ENCODE measurements at regions of chr4 and their contacts with region 1.

Region 1: GRCh38 chr4:89254847-89255246 is 52.8 kb downstream of the GPRIN3 start:
- DNase-seq: peak; percentile 52
- ATAC-seq: peak; percentile 53
- H3K4me3 ChIP-seq: no peak overlapping the region
- H3K4me3 Mint-ChIP-seq: no peak overlapping the region
- H3K27ac ChIP-seq: no peak overlapping the region
- H3K27ac Mint-ChIP-seq: no peak overlapping the region
- H3K4me1 ChIP-seq: no peaks in the 10 kb centered on the region
- H3K4me1 Mint-ChIP-seq: no peaks in the 10 kb centered on the region
- H3K27me3 ChIP-seq: no peaks in the 10 kb centered on the region
- H3K27me3 Mint-ChIP-seq: no peaks in the 10 kb centered on the region
- CTCF ChIP-seq: peak; percentile 94

Region 2: GRCh38 chr4:89072921-89073320 is 181.9 kb before region 1 on chr4:
- CTCF ChIA-PET with region 1: no interaction called
- POLR2A ChIA-PET with region 1: no interaction called
- intact Hi-C with region 1: no loop called
- DNase-seq: no peak
- ATAC-seq: no peak
- H3K4me3 ChIP-seq: no peak overlapping the region
- H3K4me3 Mint-ChIP-seq: no peak overlapping the region
- H3K27ac ChIP-seq: no peak overlapping the region
- H3K27ac Mint-ChIP-seq: no peak overlapping the region
- H3K4me1 ChIP-seq: no peaks in the 10 kb centered on the region
- H3K4me1 Mint-ChIP-seq: peaks cover 8% of the 10 kb centered on the region
- H3K27me3 ChIP-seq: no peaks in the 10 kb centered on the region
- H3K27me3 Mint-ChIP-seq: no peaks in the 10 kb centered on the region
- CTCF ChIP-seq: no peak

Region 3: GRCh38 chr4:89226665-89227574 is 27.9 kb before region 1 on chr4:
- CTCF ChIA-PET with region 1: interaction called, 18 read pairs
- POLR2A ChIA-PET with region 1: no interaction called
- intact Hi-C with region 1: no loop called
- DNase-seq: peak; percentile 73
- ATAC-seq: peak; percentile 69
- H3K4me3 ChIP-seq: no peak overlapping the region
- H3K4me3 Mint-ChIP-seq: no peak overlapping the region
- H3K27ac ChIP-seq: no peak overlapping the region
- H3K27ac Mint-ChIP-seq: no peak overlapping the region
- H3K4me1 ChIP-seq: peaks cover 0 to 4% of the 10 kb centered on the region in 2 donors
- H3K4me1 Mint-ChIP-seq: peaks cover 2% of the 10 kb centered on the region
- H3K27me3 ChIP-seq: no peaks in the 10 kb centered on the region
- H3K27me3 Mint-ChIP-seq: no peaks in the 10 kb centered on the region
- CTCF ChIP-seq: peak; percentile 83

Region 4: DNA sequence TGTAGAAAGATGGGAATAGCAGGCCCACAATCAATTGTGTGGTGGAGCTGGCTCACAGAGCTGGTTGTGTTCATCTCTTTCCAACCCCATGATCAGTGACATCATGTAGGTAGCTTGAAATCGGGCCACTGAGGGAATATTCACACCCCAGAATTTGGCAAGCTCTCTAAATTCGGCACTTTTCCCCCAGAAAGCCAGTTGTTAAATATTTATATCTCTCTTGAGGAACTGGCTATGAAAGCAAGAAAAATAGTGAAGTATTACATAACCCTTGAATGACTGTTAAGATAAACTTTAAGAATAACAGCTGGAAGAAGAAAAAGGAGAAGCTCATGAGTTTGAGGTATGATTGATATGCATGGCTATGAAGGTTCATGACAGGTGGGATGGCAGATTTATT is 13.8 kb after region 1 on chr4:
- CTCF ChIA-PET with region 1: interaction called, 10 read pairs
- POLR2A ChIA-PET with region 1: no interaction called
- intact Hi-C with region 1: no loop called
- DNase-seq: no peak
- ATAC-seq: no peak
- H3K4me3 ChIP-seq: no peak overlapping the region
- H3K4me3 Mint-ChIP-seq: no peak overlapping the region
- H3K27ac ChIP-seq: no peak overlapping the region
- H3K27ac Mint-ChIP-seq: no peak overlapping the region
- H3K4me1 ChIP-seq: no peaks in the 10 kb centered on the region
- H3K4me1 Mint-ChIP-seq: peaks cover 18% of the 10 kb centered on the region
- H3K27me3 ChIP-seq: no peaks in the 10 kb centered on the region
- H3K27me3 Mint-ChIP-seq: no peaks in the 10 kb centered on the region
- CTCF ChIP-seq: no peak

Region 5: GRCh38 chr4:89356086-89356485 is 101.2 kb after region 1 on chr4:
- CTCF ChIA-PET with region 1: interaction called, 3 read pairs
- POLR2A ChIA-PET with region 1: no interaction called
- intact Hi-C with region 1: loop called (anchors 10 kb)
- DNase-seq: no peak
- ATAC-seq: no peak
- H3K4me3 ChIP-seq: no peak overlapping the region
- H3K4me3 Mint-ChIP-seq: no peak overlapping the region
- H3K27ac ChIP-seq: no peak overlapping the region
- H3K27ac Mint-ChIP-seq: no peak overlapping the region
- H3K4me1 ChIP-seq: no peaks in the 10 kb centered on the region
- H3K4me1 Mint-ChIP-seq: no peaks in the 10 kb centered on the region
- H3K27me3 ChIP-seq: no peaks in the 10 kb centered on the region
- H3K27me3 Mint-ChIP-seq: peaks cover 18% of the 10 kb centered on the region
- CTCF ChIP-seq: no peak

Region 6: GRCh38 chr4:89416960-89417359 is 162.1 kb after region 1 on chr4:
- CTCF ChIA-PET with region 1: no interaction called
- POLR2A ChIA-PET with region 1: no interaction called
- intact Hi-C with region 1: loop called (anchors 5 kb)
- DNase-seq: no peak
- ATAC-seq: no peak
- H3K4me3 ChIP-seq: no peak overlapping the region
- H3K4me3 Mint-ChIP-seq: no peak overlapping the region
- H3K27ac ChIP-seq: no peak overlapping the region
- H3K27ac Mint-ChIP-seq: no peak overlapping the region
- H3K4me1 ChIP-seq: no peaks in the 10 kb centered on the region
- H3K4me1 Mint-ChIP-seq: no peaks in the 10 kb centered on the region
- H3K27me3 ChIP-seq: no peaks in the 10 kb centered on the region
- H3K27me3 Mint-ChIP-seq: no peaks in the 10 kb centered on the region
- CTCF ChIP-seq: no peak

Region 7: GRCh38 chr4:89434364-89434988 is 179.6 kb after region 1 on chr4:
- CTCF ChIA-PET with region 1: interaction called, 20 read pairs
- POLR2A ChIA-PET with region 1: no interaction called
- intact Hi-C with region 1: loop called (anchors 1 kb)
- DNase-seq: peak; percentile 52
- ATAC-seq: peak; percentile 41
- H3K4me3 ChIP-seq: no peak overlapping the region
- H3K4me3 Mint-ChIP-seq: no peak overlapping the region
- H3K27ac ChIP-seq: no peak overlapping the region
- H3K27ac Mint-ChIP-seq: no peak overlapping the region
- H3K4me1 ChIP-seq: peaks cover 0 to 4% of the 10 kb centered on the region in 2 donors
- H3K4me1 Mint-ChIP-seq: peaks cover 7% of the 10 kb centered on the region
- H3K27me3 ChIP-seq: no peaks in the 10 kb centered on the region
- H3K27me3 Mint-ChIP-seq: peaks cover 9% of the 10 kb centered on the region
- CTCF ChIP-seq: peak; percentile 71

Measured in B cell (primary cell).